ENCODE measurements at regions of chr17 and their contacts with region 1.

Region 1: DNA sequence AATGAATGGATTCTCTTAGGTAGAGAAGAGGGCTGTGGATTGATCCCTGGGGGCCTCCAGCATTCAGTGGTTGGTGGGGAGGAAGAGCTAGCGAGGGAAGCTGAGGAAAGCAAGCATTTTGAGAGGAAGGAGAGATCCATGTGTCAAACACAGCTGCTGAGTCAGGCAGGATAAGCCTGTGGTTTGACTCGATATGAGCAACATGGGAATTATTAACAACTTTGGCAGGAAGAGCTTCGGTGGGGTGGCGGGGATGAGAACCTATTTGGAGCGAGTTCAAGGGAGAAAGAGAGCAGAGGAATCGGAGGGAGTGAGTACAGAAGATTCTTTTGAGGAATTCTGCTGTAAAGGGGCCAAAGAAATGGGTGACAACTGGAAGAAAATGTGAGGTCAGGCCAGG is 59.5 kb upstream of the CDC42EP4 start:
- DNase-seq: peak; percentile 73
- H3K4me3 ChIP-seq: no peak overlapping the region
- H3K27ac ChIP-seq: no peak overlapping the region
- H3K27me3 ChIP-seq: peaks cover 24% of the 10 kb centered on the region
- CTCF ChIP-seq: no peak

Region 2: GRCh38 chr17:73261952-73262675 is 109.2 kb before region 1 on chr17:
- CTCF ChIA-PET with region 1: interaction called, 449 read pairs
- POLR2A ChIA-PET with region 1: no interaction called
- DNase-seq: no peak
- H3K4me3 ChIP-seq: no peak overlapping the region
- H3K27ac ChIP-seq: no peak overlapping the region
- H3K27me3 ChIP-seq: no peaks in the 10 kb centered on the region
- CTCF ChIP-seq: no peak

Region 3: GRCh38 chr17:73269791-73270190 is 101.5 kb before region 1 on chr17:
- CTCF ChIA-PET with region 1: interaction called, 11 read pairs
- POLR2A ChIA-PET with region 1: no interaction called
- DNase-seq: no peak
- H3K4me3 ChIP-seq: no peak overlapping the region
- H3K27ac ChIP-seq: no peak overlapping the region
- H3K27me3 ChIP-seq: no peaks in the 10 kb centered on the region
- CTCF ChIP-seq: no peak

Region 4: GRCh38 chr17:73278465-73279453 is 92.5 kb before region 1 on chr17:
- CTCF ChIA-PET with region 1: interaction called, 10 read pairs
- POLR2A ChIA-PET with region 1: no interaction called
- DNase-seq: no peak
- H3K4me3 ChIP-seq: no peak overlapping the region
- H3K27ac ChIP-seq: no peak overlapping the region
- H3K27me3 ChIP-seq: no peaks in the 10 kb centered on the region
- CTCF ChIP-seq: no peak

Region 5: GRCh38 chr17:73311781-73312641 is 59.3 kb before region 1 on chr17 and contains the start of gene CDC42EP4:
- CTCF ChIA-PET with region 1: interaction called, 29 read pairs
- POLR2A ChIA-PET with region 1: interaction called, 5 read pairs
- DNase-seq: no peak
- H3K4me3 ChIP-seq: peak within 1 kb of the TSS; percentile 93
- H3K27ac ChIP-seq: peak within 1 kb of the TSS; percentile 90
- H3K27me3 ChIP-seq: no peaks in the 10 kb centered on the region
- CTCF ChIP-seq: no peak
- polyA plus RNA-seq, gene CDC42EP4: 21.9 and 23.1 TPM in 2 replicates

Region 6: DNA sequence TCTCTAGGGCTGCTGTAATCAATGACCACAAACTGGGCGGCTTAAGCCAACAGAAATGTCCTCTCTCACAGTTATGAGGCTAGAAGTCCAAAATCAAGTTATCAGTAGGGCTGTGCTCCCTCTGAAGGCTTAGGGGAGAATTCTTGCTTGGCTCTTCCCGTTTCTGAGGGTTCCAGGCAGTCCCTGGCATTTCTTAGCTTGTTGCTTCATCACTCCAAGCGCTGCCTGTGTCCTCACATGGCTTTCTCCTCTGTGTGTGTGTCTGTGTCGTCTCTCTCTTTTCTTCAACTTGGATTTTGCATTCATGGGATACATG is 45.8 kb before region 1 on chr17:
- CTCF ChIA-PET with region 1: interaction called, 14 read pairs
- POLR2A ChIA-PET with region 1: no interaction called
- DNase-seq: no peak
- H3K4me3 ChIP-seq: no peak overlapping the region
- H3K27ac ChIP-seq: peak overlapping the region; percentile 21
- H3K27me3 ChIP-seq: no peaks in the 10 kb centered on the region
- CTCF ChIP-seq: peak; percentile 26; the same call in 1 of the 2 replicates

Region 7: GRCh38 chr17:73349138-73349537 is 22.1 kb before region 1 on chr17:
- CTCF ChIA-PET with region 1: interaction called, 11 read pairs
- POLR2A ChIA-PET with region 1: no interaction called
- DNase-seq: no peak
- H3K4me3 ChIP-seq: no peak overlapping the region
- H3K27ac ChIP-seq: no peak overlapping the region
- H3K27me3 ChIP-seq: no peaks in the 10 kb centered on the region
- CTCF ChIP-seq: no peak

Region 8: GRCh38 chr17:73462823-73463222 is 91.5 kb after region 1 on chr17:
- CTCF ChIA-PET with region 1: no interaction called
- POLR2A ChIA-PET with region 1: no interaction called
- DNase-seq: no peak
- H3K4me3 ChIP-seq: no peak overlapping the region
- H3K27ac ChIP-seq: no peak overlapping the region
- H3K27me3 ChIP-seq: no peaks in the 10 kb centered on the region
- CTCF ChIP-seq: no peak